GM10248 (cell line): ENCODE measurements at regions of chr11 and their contacts with region 1.

Region 1: DNA sequence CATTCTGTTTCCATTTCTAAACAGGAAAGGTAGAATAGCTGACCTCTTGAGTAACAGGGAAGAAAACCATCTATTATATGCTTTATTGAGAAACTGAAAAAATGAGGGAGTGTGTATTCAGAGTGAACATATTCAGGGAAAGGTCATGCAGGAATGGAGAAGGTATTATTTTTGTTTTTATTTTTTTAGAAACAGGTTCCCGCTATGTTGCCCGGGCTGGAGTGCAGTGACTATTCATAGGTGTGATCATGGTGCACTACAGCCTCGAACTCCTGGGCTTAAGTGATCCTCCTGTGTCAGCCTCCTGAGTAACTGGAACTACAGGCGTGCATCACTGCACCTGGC is 8.8 kb upstream of the RCE1 start:
- DNase-seq: no peak
- CTCF ChIP-seq: no peak

Region 2: DNA sequence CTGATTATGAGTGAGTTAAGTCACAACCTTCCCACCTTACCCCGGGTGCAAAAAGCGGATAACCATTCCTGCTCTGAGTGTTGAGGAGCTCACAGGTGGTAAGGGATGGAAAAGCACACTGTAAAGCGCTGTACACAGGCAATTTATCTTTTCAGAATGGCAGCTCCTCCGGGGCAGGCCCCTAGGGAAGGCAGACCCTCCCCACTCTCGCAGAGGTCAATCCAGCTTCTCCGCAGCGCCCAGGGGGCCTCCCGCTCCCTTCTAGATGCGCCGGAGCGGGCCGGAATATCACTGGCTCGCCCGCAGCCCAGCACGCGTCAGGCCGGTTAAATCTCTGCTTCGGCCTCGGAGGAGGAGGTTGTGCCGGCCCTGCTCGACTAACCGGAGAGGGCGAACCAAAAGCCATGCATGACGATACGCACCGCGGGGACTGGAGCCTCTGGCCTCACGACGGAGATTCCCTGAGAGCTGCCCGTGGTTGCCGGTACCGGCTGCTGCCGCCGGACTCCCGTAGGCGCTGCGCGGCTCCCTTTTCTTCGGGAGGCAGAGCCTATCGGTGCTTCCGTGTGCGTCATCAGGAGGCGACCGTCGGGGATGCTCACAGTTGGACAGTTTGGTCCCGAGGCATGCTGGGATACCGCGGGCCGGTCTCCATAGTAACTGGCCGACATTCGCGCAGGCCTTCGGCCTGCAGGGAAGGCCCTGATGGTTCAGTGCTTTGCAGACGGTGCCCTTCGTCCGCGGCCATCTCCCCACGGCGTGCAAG is 489.7 kb before region 1 on chr11 and contains the start of gene BRMS1:
- CTCF ChIA-PET with region 1: no interaction called
- POLR2A ChIA-PET with region 1: no interaction called
- DNase-seq: peak; percentile 96
- CTCF ChIP-seq: no peak

Region 3: GRCh38 chr11:66686801-66687750 is 147.4 kb before region 1 on chr11:
- CTCF ChIA-PET with region 1: interaction called, 241 read pairs
- POLR2A ChIA-PET with region 1: no interaction called
- DNase-seq: no peak
- CTCF ChIP-seq: no peak

Region 4: DNA sequence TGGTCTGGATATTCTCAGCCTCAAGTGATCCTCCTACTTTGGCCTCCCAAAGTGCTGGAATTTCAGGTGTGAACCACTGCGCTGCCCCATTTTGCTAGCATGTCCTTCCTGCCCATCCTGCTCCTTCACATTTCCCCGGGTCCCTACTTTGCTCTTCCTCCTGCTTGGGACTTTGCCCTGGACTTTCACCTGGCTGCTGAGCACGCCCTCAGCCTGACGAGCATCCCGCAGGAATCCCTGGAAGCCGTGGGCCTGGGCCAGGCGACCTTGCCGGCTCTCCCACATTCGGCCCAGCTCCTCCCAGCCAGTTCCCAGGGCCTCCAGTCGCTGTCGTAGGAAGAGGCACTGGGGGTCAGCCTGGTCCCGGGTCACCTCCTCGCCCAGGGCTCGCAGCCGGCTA is 134.1 kb before region 1 on chr11:
- CTCF ChIA-PET with region 1: interaction called, 241 read pairs
- POLR2A ChIA-PET with region 1: no interaction called
- DNase-seq: no peak
- CTCF ChIP-seq: no peak

Region 5: DNA sequence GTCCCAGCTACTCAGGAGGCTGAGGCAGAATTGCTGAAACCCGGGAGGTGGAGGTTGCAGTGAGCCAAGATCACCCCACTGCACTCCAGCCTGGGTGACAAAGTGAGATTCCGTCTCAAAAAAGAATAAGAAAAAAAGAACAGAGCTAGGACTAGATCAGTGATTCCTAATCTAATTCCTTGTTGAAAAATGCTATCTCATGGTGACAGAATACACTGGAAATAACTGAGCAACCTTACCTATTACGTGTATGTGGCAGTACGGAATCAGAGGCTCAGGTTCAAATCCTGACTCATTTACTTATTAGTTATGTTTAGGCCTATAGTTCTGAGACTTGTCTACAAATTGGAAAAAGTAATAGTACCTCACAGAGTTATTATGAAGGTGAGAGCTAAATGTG is 10.8 kb before region 1 on chr11:
- CTCF ChIA-PET with region 1: interaction called, 22 read pairs
- POLR2A ChIA-PET with region 1: no interaction called
- DNase-seq: no peak
- CTCF ChIP-seq: no peak

Region 6: GRCh38 chr11:66851698-66852465 is 17.4 kb after region 1 on chr11:
- CTCF ChIA-PET with region 1: interaction called, 19 read pairs
- POLR2A ChIA-PET with region 1: no interaction called
- DNase-seq: no peak
- CTCF ChIP-seq: peak; percentile 20